ENCODE measurements at regions of chr17 and their contacts with region 1.

Region 1: DNA sequence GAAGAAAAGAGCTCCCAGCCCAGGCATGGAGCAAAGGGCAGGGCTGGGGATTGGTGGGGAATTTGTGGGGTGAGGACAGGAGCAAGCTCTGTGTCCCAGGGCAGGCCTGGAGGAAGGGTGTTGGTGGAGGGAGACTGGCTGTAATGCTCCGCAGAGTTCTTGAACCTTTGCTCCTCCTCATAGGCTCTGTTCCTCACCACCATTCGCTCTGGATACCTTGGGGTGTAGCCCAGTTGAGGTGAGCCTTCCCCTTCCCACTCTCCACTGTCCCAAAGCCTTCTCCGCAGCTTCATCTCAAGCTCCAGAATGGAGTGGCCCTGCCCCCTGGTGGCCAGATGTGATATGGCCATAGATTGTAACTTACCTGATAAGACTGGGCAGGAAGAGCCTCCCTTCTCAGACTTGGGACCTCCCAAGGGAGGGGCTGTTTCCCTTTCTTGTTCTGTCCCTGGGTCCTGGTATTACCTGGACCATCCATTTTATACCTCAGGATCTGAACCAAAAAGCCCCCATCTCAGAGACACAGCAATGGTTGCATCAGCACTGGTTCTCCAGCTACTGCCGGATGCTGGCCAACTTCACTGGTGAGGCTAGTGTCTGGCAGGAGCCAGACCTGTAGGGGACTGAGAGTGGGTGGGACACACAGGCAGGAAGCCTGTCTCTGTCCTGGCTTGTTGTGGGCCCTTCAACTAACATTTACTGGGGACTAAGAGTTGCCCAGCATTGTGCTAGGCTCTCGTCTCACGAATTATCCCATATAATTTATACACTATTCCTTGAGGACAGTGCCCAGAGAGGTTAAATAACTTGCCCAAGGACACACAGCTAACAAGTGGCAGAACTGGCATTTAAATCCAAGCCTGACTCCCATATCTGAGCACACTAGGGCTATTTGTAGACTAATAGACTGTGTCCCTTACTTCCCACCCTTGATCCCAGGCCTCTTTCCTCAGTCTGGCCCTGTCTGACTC is 19.1 kb upstream of the STAC2 start:
- DNase-seq: peak; percentile 91
- ATAC-seq: peak; percentile 93
- H3K4me3 Mint-ChIP-seq: no peak overlapping the region
- H3K27ac Mint-ChIP-seq: peak overlapping the region; percentile 66
- H3K4me1 Mint-ChIP-seq: peaks cover 16% of the 10 kb centered on the region
- H3K27me3 Mint-ChIP-seq: no peaks in the 10 kb centered on the region

Region 2: GRCh38 chr17:39199820-39200069 is 45.1 kb before region 1 on chr17:
- CTCF ChIA-PET with region 1: interaction called, 187 read pairs
- POLR2A ChIA-PET with region 1: interaction called, 13 read pairs
- DNase-seq: peak; percentile 94
- ATAC-seq: peak; percentile 57
- H3K4me3 Mint-ChIP-seq: peak overlapping the region; percentile 99
- H3K27ac Mint-ChIP-seq: peak overlapping the region; percentile 97
- H3K4me1 Mint-ChIP-seq: peaks cover 63% of the 10 kb centered on the region
- H3K27me3 Mint-ChIP-seq: no peaks in the 10 kb centered on the region

Region 3: GRCh38 chr17:39209317-39210092 is 35.4 kb before region 1 on chr17:
- CTCF ChIA-PET with region 1: interaction called, 187 read pairs
- POLR2A ChIA-PET with region 1: interaction called, 8 read pairs
- DNase-seq: peak; percentile 80
- ATAC-seq: peak; percentile 61
- H3K4me3 Mint-ChIP-seq: peak overlapping the region; percentile 50
- H3K27ac Mint-ChIP-seq: peak overlapping the region; percentile 61
- H3K4me1 Mint-ChIP-seq: peaks cover 32% of the 10 kb centered on the region
- H3K27me3 Mint-ChIP-seq: peaks cover 8% of the 10 kb centered on the region

Region 4: GRCh38 chr17:39219647-39220154 is 25.2 kb before region 1 on chr17:
- CTCF ChIA-PET with region 1: interaction called, 11 read pairs
- POLR2A ChIA-PET with region 1: no interaction called
- DNase-seq: no peak
- ATAC-seq: no peak
- H3K4me3 Mint-ChIP-seq: no peak overlapping the region
- H3K27ac Mint-ChIP-seq: no peak overlapping the region
- H3K4me1 Mint-ChIP-seq: peaks cover under 1% of the 10 kb centered on the region
- H3K27me3 Mint-ChIP-seq: peaks cover 45% of the 10 kb centered on the region

Region 5: GRCh38 chr17:39264119-39264518 is 19.2 kb after region 1 on chr17:
- CTCF ChIA-PET with region 1: interaction called, 11 read pairs
- POLR2A ChIA-PET with region 1: no interaction called
- DNase-seq: no peak
- ATAC-seq: no peak
- H3K4me3 Mint-ChIP-seq: no peak overlapping the region
- H3K27ac Mint-ChIP-seq: no peak overlapping the region
- H3K4me1 Mint-ChIP-seq: no peaks in the 10 kb centered on the region
- H3K27me3 Mint-ChIP-seq: no peaks in the 10 kb centered on the region

Measured in activated CD8-positive, alpha-beta T cell treated with anti-CD3 and anti-CD28 coated beads, Interleukin-2, amount 10 ng/mL, durations not matched to agents 7 days and 5 days (primary cell).